SK-N-SH (cell line): ENCODE measurements at regions of chr1 and their contacts with region 1.

Region 1: GRCh38 chr1:39973503-39974135 is 18.7 kb downstream of the MFSD2A start:
- DNase-seq: peak; percentile 86
- H3K4me3 ChIP-seq: peak overlapping the region in 1 of 2 experiments; percentile 35; a peak in 1 of 4 replicates
- H3K27ac ChIP-seq: no peak overlapping the region
- H3K4me1 ChIP-seq: no peaks in the 10 kb centered on the region; a peak in 1 of 4 replicates
- H3K27me3 ChIP-seq: no peaks in the 10 kb centered on the region
- CTCF ChIP-seq: peak; percentile 98
- EP300 ChIP-seq: no peak
- RAD21 ChIP-seq: peak; percentile 99

Region 2: GRCh38 chr1:39761525-39762260 is 211.9 kb before region 1 on chr1:
- CTCF ChIA-PET with region 1: no interaction called
- POLR2A ChIA-PET with region 1: no interaction called
- DNase-seq: no peak
- H3K4me3 ChIP-seq: no peak overlapping the region
- H3K27ac ChIP-seq: no peak overlapping the region
- H3K4me1 ChIP-seq: no peaks in the 10 kb centered on the region; a peak in 1 of 4 replicates
- H3K27me3 ChIP-seq: no peaks in the 10 kb centered on the region
- CTCF ChIP-seq: no peak
- EP300 ChIP-seq: no peak
- RAD21 ChIP-seq: no peak

Region 3: DNA sequence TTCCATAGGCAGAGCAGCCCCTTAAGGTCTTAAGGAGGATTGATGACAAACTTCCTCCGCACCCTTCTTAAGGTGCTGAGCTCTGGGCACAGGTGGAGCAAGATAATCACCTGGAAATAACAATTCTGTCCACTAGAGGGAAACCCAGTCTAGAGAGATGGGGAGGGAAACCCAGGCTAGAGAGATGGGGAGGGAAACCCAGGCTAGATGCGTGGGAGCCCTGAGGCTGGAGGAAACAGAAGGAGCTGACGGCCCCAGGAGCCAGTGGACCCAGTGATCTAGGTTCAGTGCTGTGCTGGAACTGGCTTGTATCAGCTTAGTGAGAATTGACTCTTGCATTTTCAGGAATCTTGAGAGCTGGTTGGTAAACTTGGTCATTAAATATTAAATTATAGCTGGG is 54.1 kb before region 1 on chr1:
- CTCF ChIA-PET with region 1: interaction called, 209 read pairs
- POLR2A ChIA-PET with region 1: no interaction called
- DNase-seq: peak; percentile 88
- H3K4me3 ChIP-seq: no peak overlapping the region
- H3K27ac ChIP-seq: no peak overlapping the region
- H3K4me1 ChIP-seq: no peaks in the 10 kb centered on the region
- H3K27me3 ChIP-seq: no peaks in the 10 kb centered on the region; the same call in none of the 2 replicates
- CTCF ChIP-seq: peak; percentile 67
- EP300 ChIP-seq: no peak
- RAD21 ChIP-seq: peak; percentile 85

Region 4: GRCh38 chr1:39954816-39955546 is 18.6 kb before region 1 on chr1 and contains the start of gene MFSD2A:
- CTCF ChIA-PET with region 1: interaction called, 37 read pairs
- POLR2A ChIA-PET with region 1: no interaction called
- DNase-seq: peak; percentile 98
- H3K4me3 ChIP-seq: peak within 1 kb of the TSS; percentile 66 to 71
- H3K27ac ChIP-seq: peak within 1 kb of the TSS in 1 of 2 experiments; percentile 40; a peak in 1 of 4 replicates
- H3K4me1 ChIP-seq: peaks cover 0 to 23% of the 10 kb centered on the region in 2 experiments; a peak in 1 of 4 replicates
- H3K27me3 ChIP-seq: no peaks in the 10 kb centered on the region
- CTCF ChIP-seq: no peak
- EP300 ChIP-seq: no peak
- RAD21 ChIP-seq: no peak
- polyA plus RNA-seq, gene MFSD2A: 4.1 and 6.3 TPM in 2 replicates

Region 5: DNA sequence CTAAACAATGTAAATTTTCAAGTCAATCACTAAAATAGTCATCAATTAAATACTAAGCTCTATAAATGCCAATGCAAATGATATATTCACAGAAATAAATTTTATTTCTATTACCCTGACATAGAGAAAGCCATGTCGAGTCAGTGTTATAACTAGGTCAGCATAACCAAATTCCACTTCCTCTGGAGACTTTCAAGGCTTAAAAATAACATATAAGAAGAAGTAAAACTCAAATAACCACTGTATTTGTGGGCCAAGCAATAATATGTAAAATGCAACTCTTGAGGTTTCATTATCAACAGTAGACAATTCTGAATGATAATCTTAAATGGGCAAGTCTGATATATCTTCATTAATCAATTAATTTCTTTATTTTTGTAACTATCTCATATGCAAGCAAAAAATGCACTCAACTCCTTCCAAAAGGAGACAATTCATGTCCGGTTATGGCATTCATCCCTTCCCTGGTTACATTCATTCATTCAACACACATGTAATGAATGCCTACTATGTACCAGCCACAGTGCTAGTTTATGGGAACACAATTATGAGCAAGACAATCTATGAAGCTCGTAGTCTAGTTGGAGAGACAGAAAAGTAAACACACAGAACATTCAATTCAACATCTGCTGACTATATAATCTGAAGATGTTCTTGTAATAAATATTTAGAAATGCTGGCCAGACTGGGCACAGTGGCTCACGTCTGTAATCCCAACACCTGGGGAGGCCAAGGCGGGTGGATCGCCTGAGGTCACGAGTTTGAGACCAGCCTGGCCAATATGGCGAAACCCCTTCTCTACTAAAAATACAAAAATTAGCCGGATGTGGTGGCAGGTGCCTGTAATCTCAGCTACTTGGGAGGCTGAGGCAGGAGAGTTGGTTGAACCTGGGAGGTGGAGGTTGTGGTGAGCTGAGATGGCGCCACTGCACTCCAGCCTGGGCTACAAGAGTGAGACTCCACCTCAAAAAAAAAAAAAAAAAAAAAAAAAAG is 29.8 kb after region 1 on chr1:
- CTCF ChIA-PET with region 1: no interaction called
- POLR2A ChIA-PET with region 1: no interaction called
- DNase-seq: no peak
- H3K4me3 ChIP-seq: no peak overlapping the region
- H3K27ac ChIP-seq: no peak overlapping the region
- H3K4me1 ChIP-seq: no peaks in the 10 kb centered on the region
- H3K27me3 ChIP-seq: no peaks in the 10 kb centered on the region
- CTCF ChIP-seq: no peak
- EP300 ChIP-seq: no peak
- RAD21 ChIP-seq: no peak

Region 6: GRCh38 chr1:40014812-40015594 is 41.4 kb after region 1 on chr1:
- CTCF ChIA-PET with region 1: interaction called, 15 read pairs
- POLR2A ChIA-PET with region 1: no interaction called
- DNase-seq: no peak
- H3K4me3 ChIP-seq: no peak overlapping the region
- H3K27ac ChIP-seq: peak overlapping the region in 1 of 2 experiments; percentile 72; a peak in 2 of 4 replicates
- H3K4me1 ChIP-seq: peaks cover 0 to 9% of the 10 kb centered on the region in 2 experiments; a peak in 1 of 4 replicates
- H3K27me3 ChIP-seq: no peaks in the 10 kb centered on the region
- CTCF ChIP-seq: no peak
- EP300 ChIP-seq: peak in 1 of 2 experiments; percentile 37; a peak in 1 of 4 replicates
- RAD21 ChIP-seq: no peak

Region 7: GRCh38 chr1:40132383-40133311 is 159.0 kb after region 1 on chr1:
- CTCF ChIA-PET with region 1: no interaction called
- POLR2A ChIA-PET with region 1: no interaction called
- DNase-seq: peak; percentile 38
- H3K4me3 ChIP-seq: no peak overlapping the region; a peak in 1 of 4 replicates
- H3K27ac ChIP-seq: no peak overlapping the region
- H3K4me1 ChIP-seq: no peaks in the 10 kb centered on the region
- H3K27me3 ChIP-seq: peaks cover 6% of the 10 kb centered on the region; the same call in 1 of the 2 replicates
- CTCF ChIP-seq: no peak
- EP300 ChIP-seq: no peak
- RAD21 ChIP-seq: no peak